ENCODE measurements at regions of chr2 and their contacts with region 1.

Region 1: GRCh38 chr2:85728883-85729824 is 24.6 kb upstream of the ATOH8 start:
- DNase-seq: peak; percentile 96 to 98
- ATAC-seq: peak; percentile 63 to 72
- H3K4me3 ChIP-seq: peak overlapping the region in 2 of 4 donors; percentile 6 to 10
- H3K27ac ChIP-seq: peak overlapping the region; percentile 82 to 97 (median 94)
- H3K4me1 ChIP-seq: peaks cover 49 to 54% of the 10 kb centered on the region in 2 donors
- H3K27me3 ChIP-seq: no peaks in the 10 kb centered on the region
- CTCF ChIP-seq: peak; percentile 98 to 99 (median 99)
- POLR2A ChIP-seq: peak; percentile 46 to 68

Region 2: DNA sequence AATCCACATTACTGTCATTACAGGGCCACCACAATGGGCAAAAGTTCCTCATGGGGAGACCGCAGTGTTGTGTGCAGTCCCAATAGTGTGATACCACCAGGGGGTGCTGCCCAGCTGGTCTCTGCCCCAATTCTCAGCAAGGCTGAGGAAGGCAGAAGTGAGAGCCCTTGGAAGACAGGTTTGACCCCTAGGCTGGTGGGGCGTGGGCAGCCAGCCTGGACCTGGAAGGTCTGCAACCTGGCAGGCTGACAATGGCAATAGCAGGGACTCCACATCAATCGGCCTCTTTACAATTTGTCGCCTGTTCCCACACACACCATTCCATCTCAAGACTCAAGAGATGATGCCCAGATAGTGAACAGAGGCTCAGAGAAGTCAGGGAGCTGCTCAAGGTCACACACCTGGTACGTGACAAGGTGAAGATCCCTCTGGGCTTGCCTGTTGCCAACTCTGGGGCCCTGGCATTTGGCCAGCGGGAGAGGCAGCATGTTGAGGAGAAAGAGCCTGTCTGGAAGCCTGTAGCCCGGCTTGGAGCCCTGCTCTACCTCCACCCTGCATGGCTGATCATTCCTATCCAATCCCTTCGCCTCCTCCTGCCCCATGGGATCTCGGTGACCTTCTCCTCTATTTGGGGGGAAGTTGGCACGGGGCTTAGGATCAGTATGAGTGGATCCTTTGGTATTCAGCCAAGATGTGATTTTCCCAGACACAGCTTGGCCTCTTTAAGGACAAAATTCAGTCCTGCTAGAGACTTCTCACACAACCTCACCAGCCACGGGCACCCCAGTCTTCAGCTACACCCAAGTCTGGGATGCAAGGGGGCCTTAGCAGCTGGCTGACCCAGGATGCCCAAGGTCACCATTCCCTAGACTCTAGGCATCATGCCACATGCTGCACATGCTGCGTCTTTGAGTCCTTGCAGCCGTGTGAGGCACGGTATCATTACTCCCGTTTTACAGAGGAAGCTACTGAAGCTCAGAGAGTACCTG is 21.7 kb after region 1 on chr2:
- in situ Hi-C with region 1: no loop called
- intact Hi-C with region 1: loop called (anchors 2 kb)
- DNase-seq: peak in 1 of 2 donors; percentile 82
- ATAC-seq: peak; percentile 27 to 37
- H3K4me3 ChIP-seq: no peak overlapping the region
- H3K27ac ChIP-seq: peak overlapping the region; percentile 86 to 95 (median 93)
- H3K4me1 ChIP-seq: peaks cover 52 to 64% of the 10 kb centered on the region in 2 donors
- H3K27me3 ChIP-seq: no peaks in the 10 kb centered on the region
- CTCF ChIP-seq: peak; percentile 68 to 90 (median 83)
- POLR2A ChIP-seq: no peak

Region 3: GRCh38 chr2:85804583-85804982 is 75.4 kb after region 1 on chr2:
- in situ Hi-C with region 1: no loop called
- intact Hi-C with region 1: loop called (anchors 2 kb)
- DNase-seq: no peak
- ATAC-seq: peak in 1 of 2 donors; percentile 43
- H3K4me3 ChIP-seq: no peak overlapping the region
- H3K27ac ChIP-seq: no peak overlapping the region
- H3K4me1 ChIP-seq: peaks cover 8 to 11% of the 10 kb centered on the region in 2 donors
- H3K27me3 ChIP-seq: no peaks in the 10 kb centered on the region
- CTCF ChIP-seq: peak; percentile 47 to 75 (median 72)
- POLR2A ChIP-seq: no peak

Region 4: GRCh38 chr2:85888684-85889626 is 159.8 kb after region 1 on chr2 and contains the start of gene ST3GAL5:
- in situ Hi-C with region 1: no loop called
- intact Hi-C with region 1: loop called (anchors 10 kb)
- DNase-seq: peak; percentile 84
- ATAC-seq: peak; percentile 74 to 80
- H3K4me3 ChIP-seq: peak within 1 kb of the TSS; percentile 53 to 87 (median 72)
- H3K27ac ChIP-seq: peak within 1 kb of the TSS; percentile 82 to 92 (median 88)
- H3K4me1 ChIP-seq: peaks cover 28 to 33% of the 10 kb centered on the region in 2 donors
- H3K27me3 ChIP-seq: no peaks in the 10 kb centered on the region
- CTCF ChIP-seq: peak; percentile 59 to 80 (median 66)
- POLR2A ChIP-seq: peak; percentile 48 to 78
- total RNA-seq, gene ST3GAL5: 12.6 to 26.0 (median 21.8) TPM

Region 5: DNA sequence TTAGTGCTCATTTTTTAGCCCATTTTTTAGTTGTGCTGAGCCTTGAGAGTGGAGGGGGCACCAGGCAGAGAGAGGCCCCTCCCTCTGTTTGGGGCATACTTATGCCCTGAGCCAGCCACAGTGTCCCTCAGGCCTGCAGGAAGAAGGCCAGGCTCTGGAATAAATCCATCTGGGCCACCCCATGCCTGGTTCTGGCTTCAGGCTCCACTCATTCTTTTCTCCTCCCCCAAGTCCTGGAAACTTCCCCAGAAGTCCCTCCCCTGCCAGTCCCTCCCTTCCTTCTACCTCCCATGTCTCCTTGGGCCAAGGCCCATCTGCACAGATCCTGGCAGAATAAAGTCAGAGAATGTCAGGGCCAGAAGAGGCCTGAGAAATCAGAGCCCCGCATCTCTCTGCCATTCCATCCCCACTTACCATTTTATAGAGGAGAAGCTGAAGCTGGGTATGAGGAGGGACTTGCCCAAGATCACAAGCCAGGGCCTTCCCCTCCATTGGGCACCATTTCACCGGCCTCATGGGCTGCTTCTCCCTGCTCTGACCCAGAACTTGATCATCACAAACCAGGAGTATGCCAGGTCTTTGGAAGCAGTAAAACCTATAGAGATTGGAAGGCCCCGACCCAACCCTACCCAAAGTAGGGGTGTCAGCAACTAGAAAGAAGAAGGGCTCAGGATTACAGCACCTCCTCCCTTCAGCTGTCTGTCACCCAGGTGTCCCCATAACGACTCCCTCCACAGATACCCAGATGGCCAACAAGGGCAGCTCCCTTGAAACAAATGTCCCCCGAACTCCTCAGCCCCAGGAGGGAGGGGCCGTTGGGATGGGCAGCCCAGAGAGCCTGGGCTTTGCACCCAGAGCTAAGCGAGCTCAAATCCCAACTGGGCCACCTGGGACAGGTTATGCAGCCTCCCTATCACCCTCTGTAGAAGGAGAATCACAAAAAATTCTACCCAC is 268.1 kb after region 1 on chr2:
- in situ Hi-C with region 1: no loop called
- intact Hi-C with region 1: no loop called
- DNase-seq: peak; percentile 57 to 67
- ATAC-seq: peak; percentile 50 to 62
- H3K4me3 ChIP-seq: no peak overlapping the region
- H3K27ac ChIP-seq: peak overlapping the region; percentile 62 to 78 (median 70)
- H3K4me1 ChIP-seq: peaks cover 28 to 40% of the 10 kb centered on the region in 2 donors
- H3K27me3 ChIP-seq: no peaks in the 10 kb centered on the region
- CTCF ChIP-seq: no peak
- POLR2A ChIP-seq: no peak

Region 6: DNA sequence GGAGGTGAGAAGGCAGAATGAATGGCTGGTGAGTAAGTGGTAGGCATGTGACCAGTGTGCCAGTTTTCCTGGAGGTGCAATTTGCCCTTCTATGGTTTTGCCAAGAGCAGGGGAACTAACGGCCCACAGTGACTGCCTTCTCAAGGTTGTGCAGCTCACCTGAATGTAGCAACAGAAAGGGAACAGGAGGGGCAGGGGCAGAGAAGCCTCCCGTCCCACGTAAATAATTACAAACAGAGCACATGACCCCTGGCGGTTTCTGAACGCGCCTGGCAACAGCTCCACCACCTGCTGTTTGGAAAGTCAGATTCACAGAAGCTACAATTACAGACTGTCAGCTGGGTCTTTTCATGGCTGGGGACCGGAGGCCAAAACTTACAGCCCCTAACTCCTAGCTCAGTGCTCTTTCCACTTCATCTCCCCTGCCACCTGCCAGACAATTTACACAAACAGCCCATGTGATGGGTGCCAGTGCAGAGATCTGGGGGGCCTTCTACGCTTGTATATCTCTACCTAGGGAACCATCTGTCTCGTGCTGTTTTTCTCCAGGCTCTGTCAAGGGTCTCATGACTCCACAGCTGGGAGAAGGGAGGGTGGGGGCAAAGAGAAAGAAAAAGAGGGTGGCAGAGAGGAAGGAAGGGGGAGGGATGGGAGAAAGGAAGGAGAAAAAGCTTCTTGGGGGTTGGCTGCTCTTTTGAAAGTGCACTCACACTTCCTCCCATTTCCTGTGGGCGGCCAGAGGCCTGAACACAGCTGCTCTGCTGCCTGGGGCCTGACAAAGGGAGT is 306.9 kb after region 1 on chr2:
- in situ Hi-C with region 1: no loop called
- intact Hi-C with region 1: loop called (anchors 5 kb)
- DNase-seq: peak; percentile 91 to 96
- ATAC-seq: peak; percentile 83 to 87
- H3K4me3 ChIP-seq: no peak overlapping the region
- H3K27ac ChIP-seq: peak overlapping the region; percentile 91 to 99 (median 98)
- H3K4me1 ChIP-seq: peaks cover 52 to 58% of the 10 kb centered on the region in 2 donors
- H3K27me3 ChIP-seq: no peaks in the 10 kb centered on the region
- CTCF ChIP-seq: peak; percentile 21 to 55 (median 29)
- POLR2A ChIP-seq: peak; percentile 67 to 84